HCT116 (cell line): ENCODE measurements at regions of chr5 and their contacts with region 1.

Region 1: GRCh38 chr5:159987031-159987674 is 21.8 kb upstream of the TTC1 start:
- DNase-seq: peak; percentile 57
- ATAC-seq: peak; percentile 98
- H3K4me3 ChIP-seq: peak overlapping the region; percentile 41 to 56
- H3K27ac ChIP-seq: no peak overlapping the region
- H3K4me1 ChIP-seq: peaks cover 0 to 19% of the 10 kb centered on the region in 2 experiments; a peak in 2 of 4 replicates
- H3K27me3 ChIP-seq: peaks cover 14% of the 10 kb centered on the region; the same call in 1 of the 2 replicates
- CTCF ChIP-seq: peak; percentile 85 to 87 (median 85)
- POLR2A ChIP-seq: no peak
- RAD21 ChIP-seq: peak; percentile 98

Region 2: DNA sequence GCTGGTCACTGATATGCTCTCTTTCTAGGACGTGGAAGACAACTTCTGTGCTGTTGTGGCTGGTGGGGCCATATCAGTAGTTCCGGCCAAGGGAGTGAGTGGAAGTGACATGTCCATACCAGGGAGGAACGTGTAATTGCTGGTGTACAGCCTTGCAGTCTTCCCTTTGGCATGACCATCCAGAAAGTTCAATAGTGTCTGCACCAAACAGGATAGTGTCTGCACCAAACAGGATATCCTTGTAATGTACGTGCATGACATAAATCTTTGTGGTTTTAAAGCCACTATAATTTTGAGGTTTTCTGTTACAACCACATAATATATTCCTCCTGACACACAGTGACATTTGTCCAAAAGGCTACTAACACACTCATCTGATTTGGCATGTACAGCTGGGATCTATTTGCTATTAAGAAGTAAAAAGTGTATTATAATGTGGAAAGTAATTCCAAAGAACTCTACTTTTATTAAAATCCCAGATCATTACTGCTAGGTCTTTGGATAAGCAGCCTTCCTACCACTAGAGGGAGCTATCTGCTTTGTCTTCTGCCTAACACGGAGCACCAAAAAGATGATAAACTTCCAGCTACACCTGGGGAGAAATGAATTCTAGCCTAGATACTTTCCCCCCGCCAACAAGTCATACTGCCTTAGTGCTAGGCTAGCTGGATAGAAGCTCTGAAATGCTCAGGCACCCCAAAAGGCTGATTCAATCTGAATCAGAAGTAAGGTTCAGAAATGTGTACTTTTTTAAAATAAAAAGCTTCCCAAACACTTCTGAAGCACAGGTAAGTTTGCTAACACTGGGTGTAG is 830.5 kb before region 1 on chr5:
- CTCF ChIA-PET with region 1: interaction called, 19 read pairs
- POLR2A ChIA-PET with region 1: no interaction called
- RAD21 ChIA-PET with region 1: no interaction called
- intact Hi-C with region 1: loop called (anchors 1 kb)
- DNase-seq: peak; percentile 57
- ATAC-seq: peak; percentile 89
- H3K4me3 ChIP-seq: no peak overlapping the region
- H3K27ac ChIP-seq: no peak overlapping the region
- H3K4me1 ChIP-seq: no peaks in the 10 kb centered on the region
- H3K27me3 ChIP-seq: no peaks in the 10 kb centered on the region
- CTCF ChIP-seq: peak; percentile 68 to 94 (median 74); a peak in 5 of 6 replicates
- POLR2A ChIP-seq: no peak
- RAD21 ChIP-seq: peak; percentile 88

Region 3: GRCh38 chr5:159331093-159331973 is 655.8 kb before region 1 on chr5:
- CTCF ChIA-PET with region 1: no interaction called
- POLR2A ChIA-PET with region 1: no interaction called
- RAD21 ChIA-PET with region 1: interaction called in 1 of 2 experiments, 4 read pairs
- intact Hi-C with region 1: loop called (anchors 2 kb)
- DNase-seq: no peak
- ATAC-seq: peak; percentile 94
- H3K4me3 ChIP-seq: peak overlapping the region; percentile 57 to 70
- H3K27ac ChIP-seq: peak overlapping the region; percentile 45; the same call in 1 of the 2 replicates
- H3K4me1 ChIP-seq: peaks cover 0 to 23% of the 10 kb centered on the region in 2 experiments; a peak in 2 of 4 replicates
- H3K27me3 ChIP-seq: no peaks in the 10 kb centered on the region
- CTCF ChIP-seq: peak; percentile 61 to 83 (median 73); a peak in 5 of 6 replicates
- POLR2A ChIP-seq: no peak
- RAD21 ChIP-seq: peak; percentile 79

Region 4: DNA sequence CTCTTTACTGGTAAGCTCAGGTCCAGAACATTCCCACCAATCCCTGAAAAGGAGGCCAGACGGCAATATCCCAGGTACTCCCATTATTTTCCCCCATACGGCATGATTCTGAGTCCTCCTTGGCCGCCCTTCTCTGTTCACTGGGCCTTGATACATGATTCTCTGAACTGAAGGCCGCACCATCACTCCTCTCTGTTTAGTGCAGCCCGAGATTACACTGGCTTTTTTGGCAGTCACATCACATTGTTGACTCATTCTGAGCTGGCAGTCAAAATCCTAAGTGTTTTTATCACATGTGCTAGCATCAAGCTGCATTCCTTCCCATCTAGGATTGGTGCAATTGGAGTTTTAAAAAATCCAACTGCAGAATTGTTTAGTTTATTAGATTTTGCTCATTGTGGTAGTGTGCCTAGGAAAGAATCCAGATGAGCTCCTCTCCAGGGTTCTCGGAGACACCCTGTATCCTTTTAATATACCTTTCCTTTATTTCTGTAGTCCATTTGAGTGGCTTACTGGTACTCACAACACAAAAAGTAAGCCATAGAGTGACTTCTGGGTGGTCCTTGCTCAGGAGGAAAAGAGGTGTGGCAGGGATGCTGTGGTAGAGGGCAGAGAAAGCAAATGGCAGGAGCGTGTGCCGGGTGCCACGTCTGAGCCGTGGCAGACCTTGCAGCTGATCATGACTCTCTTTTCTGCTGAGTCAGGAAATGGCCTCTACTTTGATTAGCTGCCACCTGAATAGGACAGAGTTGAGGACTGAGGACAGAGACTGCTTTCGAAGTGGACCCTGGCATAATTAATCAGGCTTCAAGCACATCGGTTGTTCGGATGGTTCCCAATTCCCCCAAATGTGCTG is 535.7 kb before region 1 on chr5:
- CTCF ChIA-PET with region 1: interaction called, 57 read pairs
- POLR2A ChIA-PET with region 1: no interaction called
- RAD21 ChIA-PET with region 1: no interaction called
- intact Hi-C with region 1: no loop called
- DNase-seq: peak; percentile 46
- ATAC-seq: peak; percentile 63
- H3K4me3 ChIP-seq: no peak overlapping the region
- H3K27ac ChIP-seq: no peak overlapping the region
- H3K4me1 ChIP-seq: peaks cover 22 to 31% of the 10 kb centered on the region in 2 experiments
- H3K27me3 ChIP-seq: no peaks in the 10 kb centered on the region
- CTCF ChIP-seq: no peak
- POLR2A ChIP-seq: no peak
- RAD21 ChIP-seq: no peak

Region 5: GRCh38 chr5:159531554-159532105 is 455.5 kb before region 1 on chr5:
- CTCF ChIA-PET with region 1: no interaction called
- POLR2A ChIA-PET with region 1: no interaction called
- RAD21 ChIA-PET with region 1: interaction called in 1 of 2 experiments, 3 read pairs
- intact Hi-C with region 1: loop called (anchors 5 kb)
- DNase-seq: no peak
- ATAC-seq: no peak
- H3K4me3 ChIP-seq: no peak overlapping the region
- H3K27ac ChIP-seq: no peak overlapping the region
- H3K4me1 ChIP-seq: peaks cover 0 to 16% of the 10 kb centered on the region in 2 experiments; a peak in 3 of 4 replicates
- H3K27me3 ChIP-seq: no peaks in the 10 kb centered on the region
- CTCF ChIP-seq: peak; percentile 24 to 43 (median 30); a peak in 2 of 6 replicates
- POLR2A ChIP-seq: no peak
- RAD21 ChIP-seq: peak; percentile 50

Region 6: DNA sequence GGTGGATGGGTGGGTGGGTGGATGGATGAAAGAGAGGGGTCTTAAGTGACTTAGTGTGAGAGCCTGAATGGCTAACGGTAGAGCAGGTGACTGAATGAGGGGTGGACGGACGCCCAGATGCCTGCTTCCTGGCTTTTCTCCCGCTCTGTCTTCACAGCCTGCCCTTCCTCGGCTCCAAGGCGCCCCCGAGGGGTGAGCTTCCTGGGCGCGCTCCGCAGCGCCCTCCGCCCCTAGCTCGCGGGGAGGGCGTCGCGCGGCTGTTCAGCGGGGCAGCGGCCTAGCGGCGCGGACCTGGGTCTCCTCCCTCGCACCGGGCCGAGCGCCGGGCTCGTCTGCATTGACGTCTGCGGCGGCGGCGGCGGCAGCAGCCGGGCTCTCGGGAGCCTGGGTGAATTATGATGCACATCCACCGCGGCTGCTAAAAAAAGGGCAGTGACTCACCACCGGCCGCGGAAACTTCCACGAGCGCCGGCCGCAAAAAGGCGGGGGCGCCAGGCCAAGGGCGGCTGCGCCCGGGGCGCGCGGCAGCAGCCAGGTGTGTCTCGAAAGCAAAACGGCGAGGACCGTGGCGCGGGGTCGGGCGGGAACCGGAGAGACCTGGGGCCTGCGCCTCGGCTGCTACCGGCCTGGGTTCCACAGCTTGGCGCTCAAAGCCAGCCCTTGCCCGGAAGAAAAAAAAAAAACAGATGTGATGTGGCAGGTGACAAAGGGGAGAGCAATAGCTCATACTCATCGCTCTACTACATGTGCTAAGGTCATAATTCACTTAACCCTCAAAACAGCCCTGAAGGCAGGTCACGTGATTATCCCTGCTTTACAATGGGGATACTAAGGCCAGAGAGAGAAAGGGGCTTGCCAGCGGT is 213.9 kb before region 1 on chr5:
- CTCF ChIA-PET with region 1: no interaction called
- POLR2A ChIA-PET with region 1: no interaction called
- RAD21 ChIA-PET with region 1: no interaction called
- intact Hi-C with region 1: loop called (anchors 10 kb)
- DNase-seq: peak; percentile 44
- ATAC-seq: peak; percentile 91
- H3K4me3 ChIP-seq: peak overlapping the region; percentile 29 to 56
- H3K27ac ChIP-seq: peak overlapping the region; percentile 56
- H3K4me1 ChIP-seq: peaks cover 9 to 34% of the 10 kb centered on the region in 2 experiments; a peak in 3 of 4 replicates
- H3K27me3 ChIP-seq: no peaks in the 10 kb centered on the region
- CTCF ChIP-seq: peak; percentile 20 to 47 (median 23); a peak in 2 of 6 replicates
- POLR2A ChIP-seq: no peak
- RAD21 ChIP-seq: peak; percentile 57